OCI-LY7 (cell line): ENCODE measurements at regions of chr3 and their contacts with region 1.

Region 1: GRCh38 chr3:9362731-9363530 is at the start of gene THUMPD3:
- DNase-seq: peak; percentile 90
- H3K4me3 ChIP-seq: peak within 1 kb of the TSS; percentile 77
- H3K27ac ChIP-seq: peak within 1 kb of the TSS; percentile 70
- H3K4me1 ChIP-seq: peaks cover 14% of the 10 kb centered on the region
- CTCF ChIP-seq: no peak
- total RNA-seq, gene THUMPD3: 12.4 and 20.7 TPM in 2 replicates

Region 2: GRCh38 chr3:9373465-9373864 is 10.5 kb after region 1 on chr3:
- CTCF ChIA-PET with region 1: interaction called, 5 read pairs
- POLR2A ChIA-PET with region 1: interaction called, 16 read pairs
- intact Hi-C with region 1: no loop called
- DNase-seq: no peak
- H3K4me3 ChIP-seq: no peak overlapping the region
- H3K27ac ChIP-seq: no peak overlapping the region
- H3K4me1 ChIP-seq: no peaks in the 10 kb centered on the region
- CTCF ChIP-seq: no peak

Region 3: GRCh38 chr3:9704347-9705322 is 341.7 kb after region 1 on chr3:
- CTCF ChIA-PET with region 1: no interaction called
- POLR2A ChIA-PET with region 1: no interaction called
- intact Hi-C with region 1: no loop called
- DNase-seq: no peak
- H3K4me3 ChIP-seq: no peak overlapping the region
- H3K27ac ChIP-seq: no peak overlapping the region
- H3K4me1 ChIP-seq: no peaks in the 10 kb centered on the region
- CTCF ChIP-seq: no peak